ENCODE measurements at regions of chr2 and their contacts with region 1.

Region 1: GRCh38 chr2:88059979-88060906 is 4.7 kb upstream of the KRCC1 start:
- DNase-seq: peak; percentile 22
- ATAC-seq: peak; percentile 62
- H3K4me3 Mint-ChIP-seq: no peak overlapping the region
- H3K27ac Mint-ChIP-seq: no peak overlapping the region
- H3K4me1 Mint-ChIP-seq: peaks cover 16% of the 10 kb centered on the region
- H3K27me3 Mint-ChIP-seq: no peaks in the 10 kb centered on the region
- CTCF ChIP-seq: 0 out of 2 replicates have a peak, but pooled peaks have one; percentile 23

Region 2: DNA sequence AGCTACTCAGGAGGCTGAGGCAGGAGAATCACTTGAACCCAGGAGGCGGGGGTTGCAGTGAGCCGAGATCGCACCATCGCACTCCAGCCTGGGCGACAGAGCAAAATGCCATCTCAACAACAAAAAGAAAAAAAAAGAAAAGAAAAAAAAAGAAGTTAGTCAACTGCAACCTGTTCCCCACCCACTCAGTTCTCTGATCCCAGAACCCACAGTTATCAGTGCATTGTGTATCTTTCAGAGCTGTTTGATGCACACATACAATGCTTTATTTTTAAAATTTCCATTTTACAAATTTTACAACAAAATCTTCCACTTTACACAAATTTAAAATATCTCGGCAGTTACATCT is 57.9 kb before region 1 on chr2:
- CTCF ChIA-PET with region 1: interaction called, 14 read pairs
- POLR2A ChIA-PET with region 1: no interaction called
- DNase-seq: no peak
- ATAC-seq: no peak
- H3K4me3 Mint-ChIP-seq: no peak overlapping the region
- H3K27ac Mint-ChIP-seq: no peak overlapping the region
- H3K4me1 Mint-ChIP-seq: peaks cover 27% of the 10 kb centered on the region
- H3K27me3 Mint-ChIP-seq: no peaks in the 10 kb centered on the region
- CTCF ChIP-seq: no peak

Region 3: DNA sequence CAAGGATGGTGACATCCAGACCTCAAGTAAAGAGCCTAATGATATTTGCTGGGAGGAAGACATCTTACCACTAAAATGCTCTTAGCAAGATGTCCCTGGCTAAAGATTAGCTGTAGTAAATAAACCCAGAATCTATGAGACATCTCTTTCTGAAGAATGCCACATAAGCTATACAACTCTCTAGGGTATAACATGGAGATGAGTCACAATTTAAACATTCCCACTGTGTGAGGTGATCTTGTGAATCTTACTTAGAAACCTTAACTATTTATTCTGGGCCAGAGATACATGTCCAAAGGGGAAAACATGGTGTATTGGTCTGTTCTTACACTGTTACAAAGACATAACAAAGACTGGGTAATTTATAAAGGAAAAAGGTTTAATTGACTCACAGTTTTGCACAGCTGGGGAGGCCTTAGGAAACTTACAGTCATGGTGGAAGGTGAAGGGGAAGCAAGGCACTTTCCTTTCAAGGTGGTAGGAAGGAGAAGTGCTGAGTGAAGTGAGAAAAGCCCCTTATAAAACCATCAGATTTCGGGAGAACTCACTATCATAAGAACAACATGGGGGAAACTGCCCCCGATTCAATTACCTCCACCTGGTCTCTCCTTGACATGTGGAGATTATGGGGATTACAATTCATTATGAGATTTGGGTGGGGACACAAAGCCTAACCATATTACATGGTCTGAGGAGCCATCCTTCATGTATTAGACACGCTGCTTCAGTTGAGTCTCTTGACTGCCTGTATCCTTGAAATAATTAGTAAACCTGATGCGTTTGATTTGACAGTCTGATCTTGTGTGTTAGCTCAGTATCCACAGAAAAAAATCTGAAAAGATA is 21.8 kb before region 1 on chr2:
- CTCF ChIA-PET with region 1: interaction called, 14 read pairs
- POLR2A ChIA-PET with region 1: no interaction called
- DNase-seq: no peak
- ATAC-seq: no peak
- H3K4me3 Mint-ChIP-seq: no peak overlapping the region
- H3K27ac Mint-ChIP-seq: peak overlapping the region; percentile 70
- H3K4me1 Mint-ChIP-seq: peaks cover 23% of the 10 kb centered on the region
- H3K27me3 Mint-ChIP-seq: no peaks in the 10 kb centered on the region
- CTCF ChIP-seq: no peak

Region 4: GRCh38 chr2:88090446-88091283 is 30.4 kb after region 1 on chr2:
- CTCF ChIA-PET with region 1: interaction called, 16 read pairs
- POLR2A ChIA-PET with region 1: no interaction called
- DNase-seq: no peak
- ATAC-seq: no peak
- H3K4me3 Mint-ChIP-seq: no peak overlapping the region
- H3K27ac Mint-ChIP-seq: no peak overlapping the region
- H3K4me1 Mint-ChIP-seq: peaks cover 12% of the 10 kb centered on the region
- H3K27me3 Mint-ChIP-seq: no peaks in the 10 kb centered on the region
- CTCF ChIP-seq: no peak

Region 5: DNA sequence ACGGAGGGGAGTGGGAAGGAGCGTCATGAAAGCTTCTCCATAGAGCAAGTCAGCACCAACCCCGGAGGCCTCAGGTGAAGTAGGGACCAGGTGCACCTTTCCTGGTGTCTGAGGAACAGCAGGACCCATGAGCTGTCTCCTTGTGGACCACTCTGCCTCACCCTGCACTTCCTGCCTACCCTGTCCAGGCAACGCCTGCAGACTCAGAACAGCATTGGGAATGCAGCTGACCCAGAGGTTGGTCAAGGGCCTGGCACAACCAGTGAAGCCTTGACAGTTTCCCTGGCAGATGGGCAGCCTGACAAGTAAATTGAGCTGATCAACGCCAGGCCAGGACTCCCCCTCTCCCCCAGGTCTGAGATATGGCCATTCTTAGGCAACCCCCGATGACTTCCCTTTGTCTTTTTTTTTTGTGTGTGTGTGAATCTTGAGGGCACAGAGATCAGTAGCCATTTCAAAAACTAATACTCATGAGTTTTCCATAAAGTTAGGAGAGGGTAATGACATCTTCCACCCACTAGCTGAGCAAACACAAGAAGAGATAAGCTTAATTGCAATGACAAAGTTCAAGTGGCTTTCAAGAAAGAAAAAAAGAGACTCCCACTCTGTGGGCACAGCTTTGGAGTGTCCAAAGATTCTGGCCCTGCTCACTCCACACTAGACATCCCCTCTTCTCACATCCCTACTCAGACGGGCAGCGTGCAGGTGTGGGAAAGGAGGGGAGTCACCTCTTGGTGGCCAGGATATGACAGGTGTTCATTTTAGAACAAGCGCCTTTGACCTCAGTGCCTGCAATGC is 71.2 kb after region 1 on chr2:
- CTCF ChIA-PET with region 1: interaction called, 14 read pairs
- POLR2A ChIA-PET with region 1: no interaction called
- DNase-seq: no peak
- ATAC-seq: no peak
- H3K4me3 Mint-ChIP-seq: no peak overlapping the region
- H3K27ac Mint-ChIP-seq: no peak overlapping the region
- H3K4me1 Mint-ChIP-seq: no peaks in the 10 kb centered on the region; the same call in 1 of the 2 replicates
- H3K27me3 Mint-ChIP-seq: no peaks in the 10 kb centered on the region; the same call in 1 of the 2 replicates
- CTCF ChIP-seq: no peak

Region 6: GRCh38 chr2:88170472-88170892 is 110.2 kb after region 1 on chr2:
- CTCF ChIA-PET with region 1: interaction called, 41 read pairs
- POLR2A ChIA-PET with region 1: interaction called, 6 read pairs
- DNase-seq: peak; percentile 46
- ATAC-seq: peak; percentile 84
- H3K4me3 Mint-ChIP-seq: peak overlapping the region; percentile 80
- H3K27ac Mint-ChIP-seq: no peak overlapping the region
- H3K4me1 Mint-ChIP-seq: peaks cover 22% of the 10 kb centered on the region
- H3K27me3 Mint-ChIP-seq: no peaks in the 10 kb centered on the region
- CTCF ChIP-seq: no peak

Region 7: DNA sequence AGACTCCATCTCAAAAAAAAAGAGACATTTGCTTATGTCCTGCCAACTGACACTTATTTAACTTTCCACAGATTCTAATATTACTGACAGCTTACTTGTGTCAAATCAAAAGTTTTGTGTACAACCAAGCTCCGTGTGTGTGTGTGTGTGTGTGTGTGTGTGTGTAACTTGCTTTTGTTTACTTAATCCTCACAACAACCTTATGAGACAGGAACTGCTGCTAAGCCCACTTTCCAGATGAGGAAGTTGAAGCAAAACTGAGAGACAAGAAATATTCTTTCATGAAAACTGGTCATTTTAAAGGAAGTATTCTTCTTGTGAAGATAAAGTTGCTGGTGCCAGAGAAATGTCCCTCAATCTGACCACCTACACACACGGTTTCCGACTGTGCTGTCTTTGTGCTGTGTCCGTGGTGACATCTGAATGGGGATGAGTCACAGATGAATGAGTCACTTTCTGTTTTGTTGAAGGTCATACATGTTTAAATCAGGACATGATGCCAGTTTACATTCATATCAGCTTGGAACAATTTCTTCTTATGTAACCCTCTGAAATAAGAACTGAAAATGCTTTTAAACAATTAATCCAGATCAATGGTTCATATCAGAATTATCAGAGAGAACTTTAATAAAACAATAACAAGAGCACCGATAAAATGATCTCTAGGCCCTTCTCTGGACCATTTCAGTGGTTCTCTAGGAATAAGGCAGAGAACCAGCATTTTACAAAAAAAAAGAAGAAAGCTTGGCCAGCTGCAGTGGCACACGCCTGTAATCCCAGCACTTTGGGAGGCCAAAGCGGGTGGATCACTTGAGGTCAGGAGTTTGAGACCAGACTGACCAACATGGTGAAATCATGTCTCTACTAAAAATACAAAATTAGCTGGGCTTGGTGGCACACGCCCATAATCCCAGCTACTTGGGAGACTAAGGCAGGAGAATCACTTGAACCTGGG is 205.4 kb after region 1 on chr2:
- CTCF ChIA-PET with region 1: no interaction called
- POLR2A ChIA-PET with region 1: no interaction called
- DNase-seq: no peak
- ATAC-seq: no peak
- H3K4me3 Mint-ChIP-seq: no peak overlapping the region
- H3K27ac Mint-ChIP-seq: no peak overlapping the region
- H3K4me1 Mint-ChIP-seq: 0 out of 2 replicates have a peak, but pooled peaks cover 3% of the 10 kb centered on the region
- H3K27me3 Mint-ChIP-seq: peaks cover 2% of the 10 kb centered on the region; the same call in 1 of the 2 replicates
- CTCF ChIP-seq: no peak

Region 8: DNA sequence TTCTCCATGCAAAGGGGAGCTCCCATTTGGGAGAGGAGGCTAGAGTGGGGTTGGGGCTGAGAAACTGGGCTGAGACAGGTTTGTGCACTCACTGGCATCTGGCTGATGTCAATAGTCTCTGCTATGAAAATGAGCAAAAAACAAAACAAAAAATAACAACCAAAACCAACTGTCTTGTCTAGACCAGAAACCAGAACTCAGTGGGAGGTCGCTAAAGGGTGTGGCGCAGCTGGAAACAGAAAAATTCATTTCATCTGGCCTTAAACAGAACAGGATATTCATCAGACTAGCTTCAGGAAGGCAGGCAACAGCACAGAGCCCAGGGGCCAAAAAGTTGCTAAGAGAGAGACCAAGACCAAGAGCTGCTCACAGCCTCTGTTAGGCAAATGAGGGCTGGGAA is 236.0 kb after region 1 on chr2:
- CTCF ChIA-PET with region 1: no interaction called
- POLR2A ChIA-PET with region 1: no interaction called
- DNase-seq: no peak
- ATAC-seq: no peak
- H3K4me3 Mint-ChIP-seq: no peak overlapping the region
- H3K27ac Mint-ChIP-seq: no peak overlapping the region
- H3K4me1 Mint-ChIP-seq: 0 out of 2 replicates have a peak, but pooled peaks cover 3% of the 10 kb centered on the region
- H3K27me3 Mint-ChIP-seq: no peaks in the 10 kb centered on the region
- CTCF ChIP-seq: no peak

Measured in WTC11 (cell line).